ENCODE measurements at regions of chr1 and their contacts with region 1.

Region 1: DNA sequence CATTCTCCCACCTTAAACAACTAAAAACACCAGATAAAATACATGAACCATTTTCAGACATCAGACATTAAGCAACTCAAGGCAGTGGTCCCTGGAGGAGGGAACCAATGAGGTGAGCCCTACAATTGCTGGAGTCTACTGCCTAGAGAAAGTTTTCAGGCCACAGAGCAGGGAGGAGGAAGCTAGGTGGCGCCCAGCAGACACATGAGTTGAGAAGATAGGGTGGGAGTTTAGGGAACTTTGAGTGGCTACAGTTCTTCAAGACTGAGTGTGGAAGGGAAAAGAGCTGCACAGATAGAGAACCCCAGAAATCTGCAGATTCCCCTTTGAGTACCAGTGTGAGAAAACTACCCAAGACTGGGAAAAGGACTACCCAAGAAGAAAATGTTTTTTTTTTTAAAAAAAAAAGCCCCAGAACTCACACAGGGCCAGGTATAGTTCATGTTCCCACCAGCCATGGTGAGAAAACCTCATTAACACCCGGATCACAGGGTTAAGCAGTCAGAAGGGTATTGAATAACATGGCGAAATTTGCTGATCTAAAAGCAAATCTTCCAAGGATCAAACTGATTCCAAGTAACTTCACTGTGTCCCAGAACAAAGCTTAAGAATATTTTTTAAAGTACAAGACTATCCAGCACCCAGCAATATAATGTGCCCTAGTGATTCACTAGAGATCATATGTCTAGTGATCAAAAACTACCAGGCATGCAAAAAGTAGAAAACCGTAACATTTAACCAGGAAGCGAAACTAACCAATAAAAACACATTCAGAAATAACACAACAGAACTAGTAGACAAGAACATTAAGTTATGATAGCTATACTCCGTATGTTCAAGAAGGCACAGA is 12.0 kb downstream of the ALDH9A1 start:
- DNase-seq: peak; percentile 27
- CTCF ChIP-seq: peak; percentile 35

Region 2: DNA sequence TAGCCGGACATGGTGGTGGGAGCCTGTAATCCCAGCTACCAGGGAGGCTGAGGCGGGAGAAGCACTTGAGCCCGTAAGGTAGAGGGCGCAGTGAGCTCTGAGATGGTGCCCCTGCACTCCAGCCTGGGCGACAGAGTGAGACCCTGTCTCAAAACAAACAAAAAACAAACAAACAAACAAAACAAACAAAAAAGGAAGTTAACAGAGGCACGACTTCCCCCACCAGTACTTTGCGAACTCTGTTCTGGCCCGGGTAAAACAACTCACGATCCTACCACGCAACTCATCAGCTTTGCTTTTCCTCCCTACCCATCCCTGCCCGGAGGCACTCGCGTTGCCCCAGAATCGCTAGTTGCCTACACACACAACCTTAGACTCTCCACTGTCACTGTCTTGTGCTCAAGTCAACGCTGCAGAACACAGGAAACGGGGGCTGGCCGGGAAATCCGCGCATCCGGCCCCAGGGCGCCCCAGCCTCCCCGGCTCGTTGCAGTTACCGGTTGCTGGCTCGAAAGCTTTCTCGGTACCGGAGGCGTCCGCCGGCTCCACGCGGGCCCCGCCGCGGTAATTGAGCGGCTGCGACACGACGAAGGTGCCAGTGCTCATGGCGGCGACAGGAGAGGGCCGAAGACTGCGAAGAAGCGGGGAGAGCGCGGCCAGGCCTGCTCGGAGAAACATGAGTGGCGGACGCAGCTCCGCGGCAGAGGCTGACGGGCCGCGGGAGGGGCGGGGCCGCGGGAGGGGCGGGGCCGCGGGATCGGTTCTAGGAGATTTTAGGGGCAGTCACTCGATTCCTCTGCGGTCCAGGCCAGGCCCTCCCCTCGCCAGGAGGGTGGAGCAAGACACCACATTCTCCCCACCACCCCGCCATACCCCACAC is 11.8 kb after region 1 on chr1 and contains the start of gene ALDH9A1:
- CTCF ChIA-PET with region 1: interaction called, 22 read pairs
- POLR2A ChIA-PET with region 1: interaction called, 4 read pairs
- DNase-seq: peak; percentile 90
- CTCF ChIP-seq: peak; percentile 48

Measured in GM10248 (cell line).